ENCODE measurements at regions of chr3 and their contacts with region 1.

Region 1: GRCh38 chr3:182258538-182259177 is 534.6 kb upstream of the ATP11B start:
- DNase-seq: peak; percentile 45
- ATAC-seq: peak; percentile 63
- H3K4me3 ChIP-seq: no peak overlapping the region
- H3K27ac ChIP-seq: no peak overlapping the region
- H3K4me1 ChIP-seq: no peaks in the 10 kb centered on the region
- H3K27me3 ChIP-seq: 0 out of 5 replicates have a peak, but pooled peaks cover 0 to 3% of the 10 kb centered on the region in 2 experiments
- CTCF ChIP-seq: peak; percentile 80
- EP300 ChIP-seq: no peak
- POLR2A ChIP-seq: no peak
- RAD21 ChIP-seq: peak; percentile 67

Region 2: GRCh38 chr3:181948286-181948685 is 310.4 kb before region 1 on chr3:
- CTCF ChIA-PET with region 1: interaction called, 3 read pairs
- POLR2A ChIA-PET with region 1: no interaction called
- in situ Hi-C with region 1: loop called (anchors 10 kb)
- intact Hi-C with region 1: loop called (anchors 1 kb)
- DNase-seq: no peak
- ATAC-seq: 0 out of 3 replicates have a peak, but pooled peaks have one; percentile 43
- H3K4me3 ChIP-seq: no peak overlapping the region
- H3K27ac ChIP-seq: no peak overlapping the region
- H3K4me1 ChIP-seq: no peaks in the 10 kb centered on the region
- H3K27me3 ChIP-seq: no peaks in the 10 kb centered on the region
- CTCF ChIP-seq: peak; percentile 39
- EP300 ChIP-seq: no peak
- POLR2A ChIP-seq: no peak
- RAD21 ChIP-seq: no peak

Region 3: DNA sequence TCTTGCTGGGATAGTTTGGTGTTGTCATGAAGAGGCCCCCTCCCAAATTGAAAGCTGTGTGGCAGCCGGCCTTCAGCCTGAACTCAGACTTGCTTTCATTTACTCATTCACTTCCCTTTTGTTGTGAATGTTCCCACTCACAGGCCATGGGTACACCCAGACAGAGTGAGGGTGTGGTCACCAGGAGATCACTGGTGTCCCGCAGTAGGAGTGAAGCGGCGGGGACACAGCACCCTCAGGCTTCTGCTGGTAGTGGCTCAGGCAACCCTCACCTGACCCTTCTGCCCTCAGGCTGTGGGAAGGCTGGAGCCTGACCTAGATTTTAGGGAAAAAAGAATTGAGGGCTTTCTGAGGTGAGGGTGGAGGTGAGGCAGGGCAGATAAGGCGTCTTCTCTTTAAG is 302.5 kb before region 1 on chr3:
- CTCF ChIA-PET with region 1: no interaction called
- POLR2A ChIA-PET with region 1: no interaction called
- in situ Hi-C with region 1: loop called (anchors 10 kb)
- intact Hi-C with region 1: no loop called
- DNase-seq: no peak
- ATAC-seq: no peak
- H3K4me3 ChIP-seq: no peak overlapping the region
- H3K27ac ChIP-seq: no peak overlapping the region
- H3K4me1 ChIP-seq: no peaks in the 10 kb centered on the region
- H3K27me3 ChIP-seq: no peaks in the 10 kb centered on the region
- CTCF ChIP-seq: no peak
- EP300 ChIP-seq: no peak
- POLR2A ChIP-seq: no peak
- RAD21 ChIP-seq: no peak

Region 4: GRCh38 chr3:182182531-182182968 is 76.1 kb before region 1 on chr3:
- CTCF ChIA-PET with region 1: no interaction called
- POLR2A ChIA-PET with region 1: no interaction called
- in situ Hi-C with region 1: no loop called
- intact Hi-C with region 1: no loop called
- DNase-seq: peak; percentile 7
- ATAC-seq: no peak
- H3K4me3 ChIP-seq: no peak overlapping the region
- H3K27ac ChIP-seq: no peak overlapping the region
- H3K4me1 ChIP-seq: peaks cover 7% of the 10 kb centered on the region; the same call in 1 of the 2 replicates
- H3K27me3 ChIP-seq: no peaks in the 10 kb centered on the region
- CTCF ChIP-seq: no peak
- EP300 ChIP-seq: no peak
- POLR2A ChIP-seq: no peak
- RAD21 ChIP-seq: no peak

Region 5: GRCh38 chr3:182618085-182618732 is 359.6 kb after region 1 on chr3:
- CTCF ChIA-PET with region 1: no interaction called
- POLR2A ChIA-PET with region 1: no interaction called
- in situ Hi-C with region 1: no loop called
- intact Hi-C with region 1: loop called (anchors 5 kb)
- DNase-seq: peak; percentile 12
- ATAC-seq: peak; percentile 68
- H3K4me3 ChIP-seq: no peak overlapping the region
- H3K27ac ChIP-seq: no peak overlapping the region
- H3K4me1 ChIP-seq: no peaks in the 10 kb centered on the region
- H3K27me3 ChIP-seq: no peaks in the 10 kb centered on the region
- CTCF ChIP-seq: peak; percentile 70
- EP300 ChIP-seq: no peak
- POLR2A ChIP-seq: no peak
- RAD21 ChIP-seq: peak; percentile 53